Activated CD8-positive, alpha-beta T cell treated with anti-CD3 and anti-CD28 coated beads, Interleukin-2, amount 10 ng/mL, durations not matched to agents 7 days and 5 days (primary cell): ENCODE measurements at regions of chr5 and their contacts with region 1.

Region 1: DNA sequence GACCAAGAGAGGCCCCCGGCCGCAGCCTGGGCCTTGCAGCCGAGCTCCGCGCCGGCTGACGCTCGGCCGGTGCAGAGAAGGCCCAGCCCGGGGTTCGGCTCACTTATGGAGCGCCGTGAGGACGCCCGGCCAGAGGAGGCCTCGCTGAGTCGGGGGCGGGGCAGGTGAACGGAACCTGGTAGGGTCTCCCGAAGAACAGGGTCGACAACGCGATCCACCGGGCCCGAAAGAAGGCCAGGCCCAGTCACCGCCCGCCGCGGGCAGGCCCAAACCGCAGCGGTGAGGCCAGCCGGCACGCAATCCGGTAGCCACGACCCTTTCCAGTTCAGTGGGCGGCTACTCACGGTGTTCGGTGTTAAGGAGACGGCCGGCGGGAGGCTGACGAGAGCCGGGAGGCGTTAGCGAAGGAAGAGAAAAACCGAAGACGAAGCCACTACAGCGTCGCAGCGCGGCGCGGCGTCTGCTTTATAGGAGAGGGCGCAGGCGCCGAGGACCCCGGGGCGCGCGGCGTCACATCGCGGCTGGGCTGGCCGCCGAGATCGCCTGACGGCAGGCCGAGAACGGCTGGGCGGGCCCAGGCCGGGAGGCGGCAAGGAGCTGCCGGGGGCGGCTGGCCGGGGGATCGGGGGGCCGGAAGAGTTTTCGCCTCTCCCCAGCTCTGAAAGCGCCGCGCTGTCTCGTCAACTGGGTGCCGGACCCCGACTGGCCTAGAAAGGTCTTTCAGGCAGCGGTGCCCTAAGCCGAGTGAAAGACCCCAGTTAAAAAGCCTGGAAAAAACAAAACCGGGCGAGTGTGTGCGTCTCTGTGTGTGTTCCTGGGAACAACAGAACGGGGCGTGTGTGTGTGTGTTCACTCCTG is at the start of gene SKP1:
- DNase-seq: peak; percentile 86
- ATAC-seq: peak; percentile 88
- H3K4me3 Mint-ChIP-seq: peak within 1 kb of the TSS; percentile 84
- H3K27ac Mint-ChIP-seq: peak within 1 kb of the TSS; percentile 98
- H3K4me1 Mint-ChIP-seq: peaks cover 28% of the 10 kb centered on the region
- H3K27me3 Mint-ChIP-seq: no peaks in the 10 kb centered on the region
- total RNA-seq, gene SKP1: 203 to 206 TPM

Region 2: GRCh38 chr5:133930061-133930812 is 246.5 kb before region 1 on chr5:
- CTCF ChIA-PET with region 1: no interaction called
- POLR2A ChIA-PET with region 1: no interaction called
- DNase-seq: peak; percentile 70
- ATAC-seq: peak; percentile 66
- H3K4me3 Mint-ChIP-seq: peak overlapping the region; percentile 64
- H3K27ac Mint-ChIP-seq: peak overlapping the region; percentile 90
- H3K4me1 Mint-ChIP-seq: peaks cover 24% of the 10 kb centered on the region
- H3K27me3 Mint-ChIP-seq: no peaks in the 10 kb centered on the region

Region 3: GRCh38 chr5:134113902-134114875 is 62.6 kb before region 1 on chr5 and contains the start of gene TCF7:
- CTCF ChIA-PET with region 1: interaction called, 3 read pairs
- POLR2A ChIA-PET with region 1: interaction called, 22 read pairs
- DNase-seq: peak; percentile 79
- ATAC-seq: peak; percentile 81
- H3K4me3 Mint-ChIP-seq: peak within 1 kb of the TSS; percentile 75
- H3K27ac Mint-ChIP-seq: peak within 1 kb of the TSS; percentile 68
- H3K4me1 Mint-ChIP-seq: peaks cover 76% of the 10 kb centered on the region
- H3K27me3 Mint-ChIP-seq: peaks cover 10% of the 10 kb centered on the region
- total RNA-seq, gene TCF7: 93.4 to 97.8 TPM

Region 4: DNA sequence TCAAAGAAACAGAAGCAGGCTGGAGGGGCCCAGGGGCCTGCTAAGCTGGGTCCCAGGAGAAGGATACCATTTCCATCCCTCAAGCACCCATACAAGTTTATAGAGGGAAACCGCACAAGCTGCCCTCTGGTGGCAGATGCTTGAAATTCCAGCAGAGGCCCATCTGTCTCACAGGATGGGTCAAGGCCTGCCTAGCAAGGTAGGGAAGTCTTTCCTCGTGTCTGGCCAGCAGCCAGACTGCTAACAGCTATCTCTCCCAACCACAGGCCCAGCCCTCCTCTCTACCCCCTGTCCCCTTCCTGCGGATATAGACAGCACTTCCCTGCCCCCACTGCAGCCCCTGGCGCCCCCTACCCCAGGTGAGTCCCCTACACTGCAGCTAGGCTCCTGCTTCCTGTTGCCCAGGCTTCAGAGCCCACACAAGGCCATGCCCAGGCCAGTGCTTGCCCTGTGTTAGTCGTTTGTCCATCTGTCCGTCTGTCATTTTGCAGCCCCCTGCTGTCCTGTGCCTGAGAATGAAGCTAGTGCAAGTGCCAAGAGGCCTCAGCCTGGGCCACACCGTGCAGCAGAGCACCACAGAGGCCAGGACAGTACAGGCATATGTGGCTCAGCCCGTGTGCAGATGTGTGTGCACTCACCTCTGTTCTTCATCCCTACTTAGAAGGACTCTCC is 36.1 kb before region 1 on chr5:
- CTCF ChIA-PET with region 1: interaction called, 4 read pairs
- POLR2A ChIA-PET with region 1: interaction called, 15 read pairs
- DNase-seq: peak; percentile 79
- ATAC-seq: peak; percentile 55
- H3K4me3 Mint-ChIP-seq: no peak overlapping the region
- H3K27ac Mint-ChIP-seq: peak overlapping the region; percentile 71
- H3K4me1 Mint-ChIP-seq: peaks cover 64% of the 10 kb centered on the region
- H3K27me3 Mint-ChIP-seq: no peaks in the 10 kb centered on the region

Region 5: GRCh38 chr5:134153657-134154056 is 23.1 kb before region 1 on chr5:
- CTCF ChIA-PET with region 1: no interaction called
- POLR2A ChIA-PET with region 1: interaction called, 25 read pairs
- DNase-seq: no peak
- ATAC-seq: no peak
- H3K4me3 Mint-ChIP-seq: no peak overlapping the region
- H3K27ac Mint-ChIP-seq: no peak overlapping the region
- H3K4me1 Mint-ChIP-seq: peaks cover 28% of the 10 kb centered on the region
- H3K27me3 Mint-ChIP-seq: no peaks in the 10 kb centered on the region

Region 6: DNA sequence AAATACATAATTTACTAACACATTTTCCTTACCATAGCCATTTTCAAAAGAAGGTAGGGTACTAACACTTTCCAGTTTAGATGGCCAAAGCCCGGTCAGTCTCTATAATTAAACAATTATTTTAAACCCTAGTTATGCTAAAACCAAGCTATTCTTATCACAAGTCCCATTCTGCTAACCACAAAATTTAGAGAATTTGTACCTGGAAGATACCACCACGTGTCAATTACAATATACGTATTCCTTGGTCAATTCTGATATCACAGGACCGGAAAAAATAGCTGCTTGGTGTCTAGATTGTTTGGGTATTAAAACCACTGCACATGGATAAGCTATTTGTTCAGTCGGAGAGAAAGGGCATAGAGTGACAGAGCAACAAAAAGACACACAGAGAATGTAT is 18.9 kb after region 1 on chr5:
- CTCF ChIA-PET with region 1: no interaction called
- POLR2A ChIA-PET with region 1: interaction called, 12 read pairs
- DNase-seq: no peak
- ATAC-seq: no peak
- H3K4me3 Mint-ChIP-seq: no peak overlapping the region
- H3K27ac Mint-ChIP-seq: no peak overlapping the region
- H3K4me1 Mint-ChIP-seq: no peaks in the 10 kb centered on the region
- H3K27me3 Mint-ChIP-seq: no peaks in the 10 kb centered on the region

Region 7: DNA sequence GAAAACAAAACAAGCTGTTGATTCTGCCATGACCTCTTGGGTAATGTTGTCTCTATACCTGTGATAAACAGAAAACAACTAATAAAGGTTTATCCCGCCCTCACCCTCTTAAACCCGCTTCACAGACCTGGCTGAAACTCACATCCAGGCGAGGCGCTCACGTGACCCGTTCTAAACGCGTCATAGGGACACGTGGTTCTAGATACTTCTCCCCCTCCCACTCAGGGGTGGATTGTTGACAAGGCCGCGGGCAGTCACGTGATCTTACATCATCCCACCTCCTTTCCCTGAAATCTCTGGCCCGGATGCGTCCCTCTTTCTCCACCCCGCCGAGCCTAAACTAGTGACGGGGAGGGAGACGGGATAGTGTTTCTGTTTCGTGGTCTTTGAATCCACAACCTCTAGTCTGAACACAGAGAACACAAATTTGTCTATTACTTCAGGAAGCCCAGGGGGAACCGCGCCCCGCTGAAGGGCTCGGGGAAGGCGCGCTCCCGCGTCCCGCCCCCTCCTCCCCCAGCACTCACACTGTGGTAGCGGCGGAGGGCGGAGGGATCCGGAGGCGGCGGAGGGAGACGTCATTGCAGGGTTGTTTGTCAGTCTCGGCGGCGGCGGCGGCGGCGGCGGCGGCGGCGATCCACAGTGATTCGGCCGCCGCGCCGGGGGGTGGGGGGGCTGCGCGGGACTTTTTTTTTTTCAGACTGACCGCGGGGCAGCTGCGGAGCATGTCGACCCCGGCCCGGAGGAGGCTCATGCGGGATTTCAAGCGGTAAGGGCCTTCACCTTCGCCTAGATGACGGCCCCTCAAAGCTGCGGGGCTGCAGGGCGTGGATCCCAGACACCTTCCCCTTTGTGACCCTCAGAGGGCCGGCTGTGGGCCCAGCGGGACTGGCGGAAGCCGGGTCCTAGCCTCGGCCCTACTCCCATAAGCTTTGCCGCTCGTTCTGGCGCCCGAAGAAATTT is 194.4 kb after region 1 on chr5 and contains the start of gene UBE2B:
- CTCF ChIA-PET with region 1: no interaction called
- POLR2A ChIA-PET with region 1: interaction called, 10 read pairs
- DNase-seq: peak; percentile 99
- ATAC-seq: peak; percentile 73
- H3K4me3 Mint-ChIP-seq: peak within 1 kb of the TSS; percentile 99
- H3K27ac Mint-ChIP-seq: peak within 1 kb of the TSS; percentile 100
- H3K4me1 Mint-ChIP-seq: peaks cover 46% of the 10 kb centered on the region
- H3K27me3 Mint-ChIP-seq: no peaks in the 10 kb centered on the region
- total RNA-seq, gene UBE2B: 83.0 to 87.6 TPM